ENCODE measurements at regions of chr15 and their contacts with region 1.

Region 1: GRCh38 chr15:25903024-25903581 is 40.0 kb upstream of the ATP10A start:
- DNase-seq: no peak
- H3K4me3 ChIP-seq: no peak overlapping the region
- H3K4me3 Mint-ChIP-seq: no peak overlapping the region
- H3K27ac ChIP-seq: no peak overlapping the region
- H3K27ac Mint-ChIP-seq: peak overlapping the region in 3 of 7 donors; percentile 41 to 85 (median 66)
- H3K4me1 ChIP-seq: no peaks in the 10 kb centered on the region
- H3K4me1 Mint-ChIP-seq: peaks cover 0 to 5% (median 4%) of the 10 kb centered on the region in 4 donors
- H3K27me3 ChIP-seq: no peaks in the 10 kb centered on the region
- H3K27me3 Mint-ChIP-seq: no peaks in the 10 kb centered on the region

Region 2: DNA sequence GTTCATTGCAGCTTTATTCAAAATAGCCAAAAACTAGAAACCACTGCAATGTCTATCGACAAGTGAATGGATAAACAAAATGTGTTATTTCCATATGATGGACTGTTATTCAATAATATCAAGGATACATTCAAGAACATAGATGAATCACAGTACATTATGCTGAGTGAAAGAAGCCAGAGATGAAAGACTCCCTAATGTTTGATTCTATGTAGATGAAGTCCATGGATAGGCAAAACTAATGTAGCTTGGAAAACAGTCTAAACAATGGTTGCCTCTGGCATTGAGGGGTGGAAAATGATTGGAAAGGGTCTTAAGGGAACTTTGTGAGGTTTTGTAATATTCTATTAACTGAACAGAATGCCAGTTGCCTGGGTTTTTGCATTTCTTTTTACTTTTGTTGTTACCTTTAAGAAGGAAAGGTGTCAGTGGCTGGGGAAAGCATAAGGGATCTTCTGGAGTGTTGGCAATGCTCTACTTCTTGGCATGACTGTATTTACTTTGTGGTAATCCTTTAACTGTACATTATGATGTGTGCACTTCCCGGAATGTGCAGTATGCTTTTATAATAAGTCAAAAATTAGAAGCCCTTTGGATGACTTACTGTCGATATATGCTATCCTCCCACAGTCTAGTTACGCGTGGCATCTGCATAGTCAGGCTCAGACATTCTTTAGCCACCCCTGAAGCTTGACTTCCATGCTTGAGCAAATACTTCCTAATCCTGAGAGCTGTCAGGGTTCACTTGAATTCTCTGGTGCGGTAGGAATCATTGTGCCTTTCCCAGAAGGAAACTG is 19.4 kb before region 1 on chr15:
- CTCF ChIA-PET with region 1: no interaction called
- POLR2A ChIA-PET with region 1: no interaction called
- intact Hi-C with region 1: loop called (anchors 2 kb)
- DNase-seq: no peak
- H3K4me3 ChIP-seq: no peak overlapping the region
- H3K4me3 Mint-ChIP-seq: no peak overlapping the region
- H3K27ac ChIP-seq: no peak overlapping the region
- H3K27ac Mint-ChIP-seq: no peak overlapping the region
- H3K4me1 ChIP-seq: no peaks in the 10 kb centered on the region
- H3K4me1 Mint-ChIP-seq: no peaks in the 10 kb centered on the region
- H3K27me3 ChIP-seq: no peaks in the 10 kb centered on the region
- H3K27me3 Mint-ChIP-seq: no peaks in the 10 kb centered on the region

Region 3: DNA sequence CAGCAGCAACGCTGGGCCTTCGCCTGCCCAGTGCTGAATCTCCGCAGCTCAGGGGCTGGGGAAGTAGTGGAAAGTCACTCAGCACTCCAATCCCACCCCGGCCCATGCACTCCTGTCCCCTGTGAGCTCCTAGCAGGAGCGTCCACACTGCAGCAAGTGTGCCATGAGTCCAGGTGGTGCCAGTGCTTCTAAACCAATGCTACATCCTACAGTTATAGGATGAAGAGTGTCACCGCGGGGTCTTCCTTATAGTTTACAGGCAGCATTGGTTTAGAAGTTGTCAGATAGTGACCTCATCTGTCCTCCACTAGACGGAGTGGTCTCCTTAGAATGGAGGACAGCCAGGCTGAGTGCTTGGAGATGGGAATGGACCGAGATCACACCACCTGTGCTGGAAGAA is 648.4 kb after region 1 on chr15:
- CTCF ChIA-PET with region 1: no interaction called
- POLR2A ChIA-PET with region 1: no interaction called
- intact Hi-C with region 1: no loop called
- DNase-seq: no peak
- H3K4me3 ChIP-seq: no peak overlapping the region
- H3K4me3 Mint-ChIP-seq: no peak overlapping the region
- H3K27ac ChIP-seq: no peak overlapping the region
- H3K27ac Mint-ChIP-seq: no peak overlapping the region
- H3K4me1 ChIP-seq: no peaks in the 10 kb centered on the region
- H3K4me1 Mint-ChIP-seq: no peaks in the 10 kb centered on the region
- H3K27me3 ChIP-seq: no peaks in the 10 kb centered on the region
- H3K27me3 Mint-ChIP-seq: no peaks in the 10 kb centered on the region